ENCODE measurements at regions of chr20 and their contacts with region 1.

Region 1: DNA sequence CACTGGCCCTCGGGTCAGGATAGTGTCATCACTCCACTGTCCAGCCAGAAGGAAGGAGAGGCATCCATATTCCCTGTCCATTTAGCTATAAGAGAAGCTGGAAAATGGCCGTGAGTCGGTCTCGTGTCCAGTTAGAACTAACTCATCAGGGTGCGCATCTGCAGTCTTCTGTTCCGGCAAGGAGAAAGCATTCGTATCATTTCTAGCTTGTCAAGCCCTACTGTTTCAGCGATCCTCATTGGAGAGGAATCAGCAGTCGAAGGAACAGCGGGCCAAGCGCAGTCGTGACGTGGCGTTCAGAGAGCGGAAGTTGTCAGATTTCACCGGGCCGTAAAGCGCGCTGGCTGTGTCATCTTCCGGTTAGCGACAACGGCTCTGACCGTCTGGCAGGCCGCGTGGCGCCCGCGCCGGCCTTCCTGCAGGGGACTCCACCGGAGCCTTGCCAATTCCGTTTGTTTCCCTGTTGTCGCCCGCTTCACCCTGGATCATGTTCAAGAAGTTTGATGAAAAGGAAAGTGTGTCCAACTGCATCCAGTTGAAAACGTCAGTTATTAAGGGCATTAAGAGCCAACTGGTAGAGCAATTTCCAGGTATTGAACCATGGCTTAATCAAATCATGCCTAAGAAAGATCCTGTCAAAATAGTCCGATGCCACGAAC is 32.9 kb downstream of the HM13 start:
- DNase-seq: peak; percentile 89
- ATAC-seq: peak; percentile 65
- H3K4me3 Mint-ChIP-seq: peak overlapping the region; percentile 84
- H3K27ac Mint-ChIP-seq: peak overlapping the region; percentile 97
- H3K4me1 Mint-ChIP-seq: peaks cover 34% of the 10 kb centered on the region
- H3K27me3 Mint-ChIP-seq: no peaks in the 10 kb centered on the region
- CTCF ChIP-seq: no peak

Region 2: DNA sequence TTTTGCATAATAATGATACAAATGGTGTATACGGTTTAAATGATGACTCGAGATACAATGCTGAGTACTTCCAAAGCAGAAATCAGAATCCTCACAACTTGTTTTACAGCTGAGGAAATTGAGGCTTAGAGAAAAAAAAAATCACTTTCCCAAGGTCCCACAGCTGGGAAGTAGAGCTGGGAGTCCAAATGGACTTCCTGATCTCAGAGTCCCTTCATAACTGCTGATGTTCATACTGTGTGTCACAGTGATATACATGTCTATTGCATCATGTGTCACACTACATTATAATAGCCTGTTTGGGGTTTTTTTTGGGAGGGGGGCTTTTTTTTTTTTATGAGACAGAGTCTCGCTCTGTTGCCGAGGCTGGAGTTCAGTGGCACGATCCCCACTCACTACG is 24.4 kb before region 1 on chr20:
- CTCF ChIA-PET with region 1: no interaction called
- POLR2A ChIA-PET with region 1: interaction called, 10 read pairs
- intact Hi-C with region 1: no loop called
- DNase-seq: no peak
- ATAC-seq: no peak
- H3K4me3 Mint-ChIP-seq: no peak overlapping the region
- H3K27ac Mint-ChIP-seq: peak overlapping the region; percentile 10
- H3K4me1 Mint-ChIP-seq: peaks cover 43% of the 10 kb centered on the region
- H3K27me3 Mint-ChIP-seq: no peaks in the 10 kb centered on the region
- CTCF ChIP-seq: no peak

Region 3: DNA sequence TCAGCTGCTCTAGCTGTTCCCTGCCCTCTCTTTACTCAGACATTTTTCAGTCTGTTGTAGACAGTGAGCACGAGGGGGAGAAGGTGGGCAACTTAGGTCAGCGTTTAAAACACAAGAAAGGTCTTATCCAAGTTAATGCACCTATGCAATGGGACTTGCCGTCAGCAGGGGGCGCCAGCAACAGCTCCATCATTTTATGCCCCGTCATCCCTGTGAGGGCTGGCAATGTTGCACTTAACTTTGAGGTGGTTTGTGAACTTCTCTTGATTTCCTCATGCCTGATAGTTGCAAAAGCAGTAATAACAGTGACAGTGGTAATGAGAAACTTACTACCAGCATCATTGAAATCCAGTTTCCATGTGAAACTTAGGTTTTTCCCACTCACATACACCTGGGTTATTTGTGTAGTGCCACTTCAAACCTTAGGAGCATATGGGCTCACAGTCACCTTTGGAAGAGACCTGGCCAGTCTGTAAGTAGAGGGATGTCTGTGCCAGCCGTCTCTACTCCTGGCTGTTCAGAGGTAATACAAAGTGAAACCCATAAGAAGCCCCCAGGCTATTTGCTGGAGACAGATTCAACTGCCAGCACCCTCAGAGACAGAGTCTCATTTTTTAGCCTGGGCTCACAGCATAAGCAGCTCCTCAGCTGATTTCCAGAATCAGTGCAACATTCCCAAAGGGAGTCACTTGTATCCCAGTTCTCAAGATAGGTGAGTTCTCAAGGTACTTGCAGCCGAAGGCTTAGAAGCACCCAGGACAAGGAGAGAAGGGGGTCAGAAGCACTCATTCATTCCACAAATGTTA is 13.2 kb after region 1 on chr20:
- CTCF ChIA-PET with region 1: interaction called, 31 read pairs
- POLR2A ChIA-PET with region 1: interaction called, 7 read pairs
- intact Hi-C with region 1: no loop called
- DNase-seq: peak; percentile 88
- ATAC-seq: peak; percentile 80
- H3K4me3 Mint-ChIP-seq: no peak overlapping the region
- H3K27ac Mint-ChIP-seq: peak overlapping the region; percentile 76
- H3K4me1 Mint-ChIP-seq: peaks cover 22% of the 10 kb centered on the region
- H3K27me3 Mint-ChIP-seq: no peaks in the 10 kb centered on the region
- CTCF ChIP-seq: peak; percentile 95